ENCODE measurements at regions of chrX and their contacts with region 1.

Region 1: DNA sequence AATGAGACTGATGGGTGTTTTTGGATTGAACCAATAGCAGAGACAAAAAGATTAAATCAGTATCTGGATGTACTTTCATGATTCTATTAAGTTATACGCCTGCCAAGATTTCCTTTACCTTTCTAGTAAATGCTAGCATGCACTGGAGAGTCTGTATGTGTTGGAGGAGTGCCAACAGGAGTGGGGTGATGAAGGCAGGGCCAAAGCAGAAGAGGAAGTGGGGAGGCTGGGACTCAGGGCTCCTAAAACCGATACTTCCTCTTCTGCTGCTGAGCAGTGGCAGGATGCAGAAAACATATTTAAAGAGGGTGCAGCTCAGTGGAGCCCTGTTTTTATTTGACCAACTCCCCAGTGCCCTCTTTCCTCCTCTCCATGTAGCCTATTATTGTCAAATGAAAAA is 5.6 kb downstream of the CYSLTR1 start:
- DNase-seq: peak; percentile 83
- H3K4me3 Mint-ChIP-seq: peak overlapping the region; percentile 86
- H3K27ac Mint-ChIP-seq: peak overlapping the region; percentile 96
- H3K4me1 Mint-ChIP-seq: peaks cover 34% of the 10 kb centered on the region
- H3K27me3 Mint-ChIP-seq: no peaks in the 10 kb centered on the region

Region 2: GRCh38 chrX:78375894-78376293 is 54.1 kb after region 1 on chrX:
- intact Hi-C with region 1: loop called (anchors 2 kb)
- DNase-seq: peak; percentile 58
- H3K4me3 Mint-ChIP-seq: no peak overlapping the region
- H3K27ac Mint-ChIP-seq: peak overlapping the region; percentile 58
- H3K4me1 Mint-ChIP-seq: peaks cover 23% of the 10 kb centered on the region
- H3K27me3 Mint-ChIP-seq: no peaks in the 10 kb centered on the region

Region 3: GRCh38 chrX:79081895-79082512 is 760.2 kb after region 1 on chrX:
- intact Hi-C with region 1: loop called (anchors 10 kb)
- DNase-seq: peak; percentile 78
- H3K4me3 Mint-ChIP-seq: peak overlapping the region; percentile 78
- H3K27ac Mint-ChIP-seq: peak overlapping the region; percentile 87
- H3K4me1 Mint-ChIP-seq: peaks cover 14% of the 10 kb centered on the region
- H3K27me3 Mint-ChIP-seq: no peaks in the 10 kb centered on the region